Activated CD8-positive, alpha-beta memory T cell treated with anti-CD3 and anti-CD28 coated beads, Interleukin-2, amount 10 ng/mL, durations not matched to agents 7 days and 5 days (primary cell): ENCODE measurements at regions of chr19 and their contacts with region 1.

Region 1: GRCh38 chr19:49301165-49301865 is 23.7 kb downstream of the SLC6A16 start:
- DNase-seq: peak; percentile 87
- ATAC-seq: peak; percentile 100
- H3K4me3 Mint-ChIP-seq: no peak overlapping the region
- H3K27ac Mint-ChIP-seq: no peak overlapping the region
- H3K4me1 Mint-ChIP-seq: no peaks in the 10 kb centered on the region
- H3K27me3 Mint-ChIP-seq: peaks cover 11% of the 10 kb centered on the region

Region 2: DNA sequence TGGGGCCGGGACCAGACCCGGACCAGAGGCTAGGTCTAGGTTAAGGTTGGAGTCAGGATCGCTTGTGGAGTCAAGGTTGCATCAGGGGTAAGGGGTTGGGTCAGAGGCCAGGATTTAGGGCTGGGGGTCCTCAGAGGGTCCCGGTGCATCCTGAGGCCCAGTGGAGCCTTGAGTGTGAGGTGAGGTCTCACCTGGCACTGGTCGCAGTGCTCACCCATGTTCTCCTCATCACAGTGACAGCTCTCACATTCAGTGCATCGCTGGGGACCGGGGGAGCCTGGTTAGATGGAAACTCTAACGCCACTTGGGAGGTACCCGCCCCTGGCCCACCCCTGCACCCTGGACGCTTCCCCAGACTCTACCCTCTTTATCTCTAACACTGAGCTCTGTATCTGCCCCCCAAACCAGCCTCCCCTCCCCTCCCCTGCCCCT is 149.2 kb before region 1 on chr19:
- CTCF ChIA-PET with region 1: no interaction called
- DNase-seq: no peak
- ATAC-seq: no peak
- H3K4me3 Mint-ChIP-seq: no peak overlapping the region
- H3K27ac Mint-ChIP-seq: no peak overlapping the region
- H3K4me1 Mint-ChIP-seq: peaks cover 24% of the 10 kb centered on the region
- H3K27me3 Mint-ChIP-seq: peaks cover 65% of the 10 kb centered on the region

Region 3: GRCh38 chr19:49272184-49272583 is 29.1 kb before region 1 on chr19:
- CTCF ChIA-PET with region 1: interaction called, 12 read pairs
- DNase-seq: no peak
- ATAC-seq: no peak
- H3K4me3 Mint-ChIP-seq: no peak overlapping the region
- H3K27ac Mint-ChIP-seq: no peak overlapping the region
- H3K4me1 Mint-ChIP-seq: peaks cover 3% of the 10 kb centered on the region
- H3K27me3 Mint-ChIP-seq: peaks cover 27% of the 10 kb centered on the region

Region 4: DNA sequence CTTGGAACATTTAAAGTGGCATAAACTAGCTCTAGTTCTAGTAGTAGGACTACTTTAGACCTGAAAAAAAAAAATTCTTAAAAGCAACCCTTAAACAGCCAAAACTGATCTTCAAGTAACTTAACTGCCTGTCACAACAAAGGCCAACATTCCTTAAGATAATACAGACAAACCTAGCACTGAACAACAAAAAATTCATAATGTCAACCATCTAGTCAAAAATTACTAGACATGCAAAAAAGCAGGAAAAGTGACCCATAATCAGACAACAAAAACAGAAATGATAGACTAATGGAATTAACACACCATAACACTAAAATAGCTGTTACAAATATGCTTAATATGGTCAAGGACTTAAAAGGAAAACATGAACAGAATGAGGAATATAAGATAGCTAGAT is 17.0 kb after region 1 on chr19:
- CTCF ChIA-PET with region 1: interaction called, 12 read pairs
- DNase-seq: no peak
- ATAC-seq: no peak
- H3K4me3 Mint-ChIP-seq: no peak overlapping the region
- H3K27ac Mint-ChIP-seq: no peak overlapping the region
- H3K4me1 Mint-ChIP-seq: peaks cover 4% of the 10 kb centered on the region
- H3K27me3 Mint-ChIP-seq: no peaks in the 10 kb centered on the region

Region 5: GRCh38 chr19:49327878-49328544 is 26.7 kb after region 1 on chr19:
- CTCF ChIA-PET with region 1: interaction called, 10 read pairs
- DNase-seq: peak; percentile 71
- ATAC-seq: peak; percentile 35
- H3K4me3 Mint-ChIP-seq: no peak overlapping the region
- H3K27ac Mint-ChIP-seq: peak overlapping the region; percentile 42
- H3K4me1 Mint-ChIP-seq: peaks cover 45% of the 10 kb centered on the region
- H3K27me3 Mint-ChIP-seq: no peaks in the 10 kb centered on the region

Region 6: GRCh38 chr19:49403404-49404187 is 102.3 kb after region 1 on chr19:
- CTCF ChIA-PET with region 1: no interaction called
- DNase-seq: no peak
- ATAC-seq: no peak
- H3K4me3 Mint-ChIP-seq: no peak overlapping the region
- H3K27ac Mint-ChIP-seq: no peak overlapping the region
- H3K4me1 Mint-ChIP-seq: peaks cover 12% of the 10 kb centered on the region
- H3K27me3 Mint-ChIP-seq: no peaks in the 10 kb centered on the region

Region 7: DNA sequence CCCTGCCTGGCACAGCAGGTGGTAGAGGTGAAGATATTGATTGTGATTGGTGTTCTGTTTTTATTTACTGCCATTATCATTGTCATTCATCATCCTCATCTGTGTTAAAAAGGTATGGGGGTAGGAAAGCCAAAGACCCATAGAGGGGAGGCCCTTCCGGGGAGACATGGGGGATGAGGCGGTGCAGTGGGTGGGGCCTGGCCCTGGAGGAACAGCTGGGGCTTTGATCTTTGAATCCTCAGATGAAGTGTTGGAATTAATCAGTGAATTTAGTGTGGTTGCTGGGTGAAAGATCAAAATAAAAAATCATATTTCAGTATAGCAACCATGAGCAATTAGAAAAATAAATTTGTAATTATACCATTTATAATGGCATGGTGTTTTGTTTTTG is 114.5 kb after region 1 on chr19:
- CTCF ChIA-PET with region 1: no interaction called
- DNase-seq: no peak
- ATAC-seq: no peak
- H3K4me3 Mint-ChIP-seq: no peak overlapping the region
- H3K27ac Mint-ChIP-seq: no peak overlapping the region
- H3K4me1 Mint-ChIP-seq: peaks cover 12% of the 10 kb centered on the region
- H3K27me3 Mint-ChIP-seq: peaks cover 38% of the 10 kb centered on the region